Calu3 (cell line): ENCODE measurements at regions of chr2 and their contacts with region 1.

Region 1: GRCh38 chr2:178112202-178113152 is at the start of gene RBM45:
- DNase-seq: peak; percentile 93
- H3K4me3 Mint-ChIP-seq: peak within 1 kb of the TSS; percentile 97
- H3K27ac Mint-ChIP-seq: peak within 1 kb of the TSS; percentile 83
- H3K4me1 Mint-ChIP-seq: peaks cover 7% of the 10 kb centered on the region
- H3K27me3 Mint-ChIP-seq: no peaks in the 10 kb centered on the region
- CTCF ChIP-seq: peak; percentile 95
- total RNA-seq, gene RBM45: 11.5 and 11.6 TPM in 2 replicates

Region 2: GRCh38 chr2:177830881-177831386 is 281.5 kb before region 1 on chr2:
- CTCF ChIA-PET with region 1: no interaction called
- intact Hi-C with region 1: no loop called
- DNase-seq: no peak
- H3K4me3 Mint-ChIP-seq: no peak overlapping the region
- H3K27ac Mint-ChIP-seq: no peak overlapping the region
- H3K4me1 Mint-ChIP-seq: no peaks in the 10 kb centered on the region
- H3K27me3 Mint-ChIP-seq: no peaks in the 10 kb centered on the region
- CTCF ChIP-seq: no peak

Region 3: DNA sequence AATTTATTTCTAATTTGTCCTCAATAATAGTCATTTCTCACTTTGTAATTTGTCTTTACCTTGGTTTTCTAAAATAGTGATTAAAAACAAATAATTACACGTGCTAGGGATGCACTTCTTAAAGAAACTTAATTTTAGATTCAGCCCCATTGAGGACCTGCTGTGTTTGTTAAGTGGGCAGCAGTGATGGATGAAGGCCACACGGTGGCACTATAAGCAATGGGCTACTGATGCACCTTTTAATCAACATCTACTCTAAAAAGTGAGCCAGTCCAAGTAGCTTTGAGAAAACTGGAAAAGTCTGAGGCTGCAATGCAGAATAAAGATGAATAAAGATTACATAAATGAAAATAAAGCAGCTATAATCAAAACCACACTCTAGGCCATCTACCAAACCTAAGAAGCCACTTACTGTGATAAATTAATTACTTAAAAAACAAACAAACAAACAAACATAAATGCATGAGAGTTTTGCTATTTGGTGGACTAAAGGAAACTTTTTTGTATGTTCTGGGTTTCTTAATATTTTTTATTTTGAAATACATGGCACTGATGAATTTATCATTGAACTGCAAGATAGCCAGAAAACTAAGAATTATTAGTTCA is 129.2 kb before region 1 on chr2:
- CTCF ChIA-PET with region 1: interaction called, 5 read pairs
- intact Hi-C with region 1: loop called (anchors 2 kb)
- DNase-seq: peak; percentile 43
- H3K4me3 Mint-ChIP-seq: no peak overlapping the region
- H3K27ac Mint-ChIP-seq: no peak overlapping the region
- H3K4me1 Mint-ChIP-seq: no peaks in the 10 kb centered on the region
- H3K27me3 Mint-ChIP-seq: no peaks in the 10 kb centered on the region
- CTCF ChIP-seq: peak; percentile 70

Region 4: DNA sequence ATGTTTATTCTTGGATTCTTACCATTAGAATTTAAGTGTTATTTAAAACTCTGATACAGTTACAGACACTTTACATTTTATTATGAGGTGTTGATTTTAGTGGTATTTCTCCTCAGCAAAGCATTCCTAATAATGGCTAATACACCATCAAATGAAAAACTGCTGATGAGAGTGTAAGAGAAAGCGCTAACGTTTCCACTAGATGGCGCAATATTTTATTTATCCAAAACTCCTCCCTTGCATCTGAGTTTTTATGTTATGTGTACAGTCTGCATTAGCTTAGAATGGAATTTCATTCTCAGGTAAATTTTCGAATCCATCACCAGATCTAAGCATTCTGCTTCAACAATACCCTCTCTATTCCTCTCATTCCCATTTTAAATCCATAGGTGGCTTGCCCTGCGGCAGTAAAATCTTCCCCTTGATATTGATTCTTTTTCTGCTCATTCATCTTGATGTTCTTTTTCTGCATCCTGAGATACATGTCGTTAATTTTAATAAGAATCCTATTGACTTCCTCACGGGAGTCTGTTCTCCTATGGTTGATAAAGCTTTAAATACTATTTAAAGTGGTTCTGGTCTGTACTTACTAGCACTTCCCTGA is 284.6 kb after region 1 on chr2:
- CTCF ChIA-PET with region 1: no interaction called
- intact Hi-C with region 1: loop called (anchors 5 kb)
- DNase-seq: peak; percentile 11
- H3K4me3 Mint-ChIP-seq: no peak overlapping the region
- H3K27ac Mint-ChIP-seq: no peak overlapping the region
- H3K4me1 Mint-ChIP-seq: no peaks in the 10 kb centered on the region
- H3K27me3 Mint-ChIP-seq: no peaks in the 10 kb centered on the region
- CTCF ChIP-seq: peak; percentile 34